B cell (primary cell): ENCODE measurements at regions of chr6 and their contacts with region 1.

Region 1: DNA sequence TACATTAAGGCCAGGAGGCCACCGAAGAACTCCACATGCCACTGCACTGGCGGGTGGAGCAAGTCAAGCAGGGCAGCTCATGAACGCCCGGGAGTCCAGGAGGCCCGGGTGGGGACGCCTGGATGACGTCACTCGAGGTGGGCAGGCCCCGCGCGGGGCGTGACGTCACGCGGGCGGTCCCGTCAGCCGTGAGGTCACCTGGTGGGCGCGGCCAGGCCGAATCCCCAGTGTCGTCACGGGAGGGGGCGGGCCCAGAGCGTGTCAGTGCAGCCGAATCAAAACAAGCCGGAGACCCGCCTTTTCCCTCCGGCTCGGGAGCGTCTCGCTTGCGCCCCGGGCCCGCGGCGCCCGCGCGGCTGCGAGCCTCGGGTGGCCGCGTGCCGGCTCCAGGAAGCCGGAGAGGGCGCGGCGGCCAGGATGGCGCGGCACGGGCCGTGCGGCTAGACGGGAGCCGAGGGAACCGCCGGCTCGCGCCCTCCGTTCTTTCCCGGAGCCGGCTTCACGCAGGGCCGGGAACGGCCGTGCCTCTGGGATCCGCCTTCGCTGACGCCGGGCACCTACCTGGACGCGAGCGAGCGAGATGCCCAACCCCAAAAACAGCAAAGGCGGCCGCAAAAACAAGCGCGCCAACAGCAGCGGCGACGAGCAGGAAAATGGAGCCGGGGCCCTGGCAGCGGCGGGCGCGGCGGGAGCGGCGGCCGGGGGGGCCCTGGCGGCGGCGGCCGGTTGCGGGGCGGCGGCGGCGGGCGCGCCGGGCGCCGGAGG is at the start of gene HECA:
- DNase-seq: peak; percentile 98
- ATAC-seq: peak; percentile 73
- H3K4me3 ChIP-seq: peak within 1 kb of the TSS; percentile 67 to 93 (median 87)
- H3K4me3 Mint-ChIP-seq: peak within 1 kb of the TSS; percentile 97
- H3K27ac ChIP-seq: peak within 1 kb of the TSS; percentile 88 to 94
- H3K27ac Mint-ChIP-seq: peak within 1 kb of the TSS; percentile 98
- H3K4me1 ChIP-seq: peaks cover 68 to 73% of the 10 kb centered on the region in 2 donors
- H3K4me1 Mint-ChIP-seq: peaks cover 71% of the 10 kb centered on the region
- H3K27me3 ChIP-seq: no peaks in the 10 kb centered on the region
- H3K27me3 Mint-ChIP-seq: no peaks in the 10 kb centered on the region
- CTCF ChIP-seq: no peak
- total RNA-seq, gene HECA: 50.4 and 53.0 TPM in 2 replicates

Region 2: DNA sequence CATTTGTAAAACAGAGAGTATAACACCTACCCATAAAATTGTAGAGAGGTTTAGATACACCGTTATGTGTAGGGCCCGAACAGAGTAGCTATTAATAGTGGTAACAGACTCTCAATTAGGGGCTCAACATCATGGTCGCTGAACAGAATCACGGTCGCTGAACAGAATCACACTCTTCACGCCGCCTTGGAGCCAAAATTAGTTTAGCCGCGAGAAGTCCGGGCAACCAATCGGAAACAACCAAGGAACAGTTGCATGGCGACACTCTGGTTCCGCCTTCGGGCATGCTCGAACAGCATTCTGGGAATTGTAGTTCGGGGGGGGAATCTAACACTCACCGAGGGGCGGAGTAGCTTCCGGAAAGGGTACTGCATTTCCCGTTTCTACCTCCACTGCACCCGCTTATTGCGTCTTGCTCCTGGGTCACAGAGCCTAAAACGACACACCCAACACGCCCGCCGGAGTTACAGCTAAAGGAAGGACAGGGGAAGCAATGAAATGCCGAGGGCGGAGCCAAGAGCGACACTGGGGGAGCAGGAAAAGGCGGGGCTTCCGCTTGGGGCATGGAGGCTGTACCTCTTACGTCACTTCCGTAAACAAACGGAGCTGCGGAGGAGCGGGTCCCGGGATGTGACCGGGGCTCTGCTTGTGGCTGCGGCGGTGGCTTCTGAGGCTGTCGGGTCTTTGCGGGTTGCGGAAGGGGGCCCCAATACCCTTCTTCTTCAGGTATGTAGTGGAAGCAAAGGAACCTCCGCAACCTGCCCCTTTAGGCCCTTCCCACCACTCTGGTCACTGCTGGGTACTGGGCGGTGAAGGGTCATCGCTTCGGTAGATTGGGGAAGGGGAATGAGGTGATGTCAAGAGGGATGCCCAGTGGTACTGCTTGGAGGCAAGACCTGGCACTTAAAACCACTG is 361.6 kb before region 1 on chr6 and contains the start of gene CCDC28A:
- CTCF ChIA-PET with region 1: no interaction called
- POLR2A ChIA-PET with region 1: no interaction called
- intact Hi-C with region 1: loop called (anchors 1 kb)
- DNase-seq: peak; percentile 97
- ATAC-seq: peak; percentile 84
- H3K4me3 ChIP-seq: peak within 1 kb of the TSS; percentile 83 to 98 (median 86)
- H3K4me3 Mint-ChIP-seq: peak within 1 kb of the TSS; percentile 99
- H3K27ac ChIP-seq: peak within 1 kb of the TSS; percentile 92 to 97
- H3K27ac Mint-ChIP-seq: peak within 1 kb of the TSS; percentile 99
- H3K4me1 ChIP-seq: peaks cover 21 to 28% of the 10 kb centered on the region in 2 donors
- H3K4me1 Mint-ChIP-seq: peaks cover 32% of the 10 kb centered on the region
- H3K27me3 ChIP-seq: no peaks in the 10 kb centered on the region
- H3K27me3 Mint-ChIP-seq: no peaks in the 10 kb centered on the region
- CTCF ChIP-seq: no peak
- total RNA-seq, gene CCDC28A: 26.3 and 26.9 TPM in 2 replicates

Region 3: DNA sequence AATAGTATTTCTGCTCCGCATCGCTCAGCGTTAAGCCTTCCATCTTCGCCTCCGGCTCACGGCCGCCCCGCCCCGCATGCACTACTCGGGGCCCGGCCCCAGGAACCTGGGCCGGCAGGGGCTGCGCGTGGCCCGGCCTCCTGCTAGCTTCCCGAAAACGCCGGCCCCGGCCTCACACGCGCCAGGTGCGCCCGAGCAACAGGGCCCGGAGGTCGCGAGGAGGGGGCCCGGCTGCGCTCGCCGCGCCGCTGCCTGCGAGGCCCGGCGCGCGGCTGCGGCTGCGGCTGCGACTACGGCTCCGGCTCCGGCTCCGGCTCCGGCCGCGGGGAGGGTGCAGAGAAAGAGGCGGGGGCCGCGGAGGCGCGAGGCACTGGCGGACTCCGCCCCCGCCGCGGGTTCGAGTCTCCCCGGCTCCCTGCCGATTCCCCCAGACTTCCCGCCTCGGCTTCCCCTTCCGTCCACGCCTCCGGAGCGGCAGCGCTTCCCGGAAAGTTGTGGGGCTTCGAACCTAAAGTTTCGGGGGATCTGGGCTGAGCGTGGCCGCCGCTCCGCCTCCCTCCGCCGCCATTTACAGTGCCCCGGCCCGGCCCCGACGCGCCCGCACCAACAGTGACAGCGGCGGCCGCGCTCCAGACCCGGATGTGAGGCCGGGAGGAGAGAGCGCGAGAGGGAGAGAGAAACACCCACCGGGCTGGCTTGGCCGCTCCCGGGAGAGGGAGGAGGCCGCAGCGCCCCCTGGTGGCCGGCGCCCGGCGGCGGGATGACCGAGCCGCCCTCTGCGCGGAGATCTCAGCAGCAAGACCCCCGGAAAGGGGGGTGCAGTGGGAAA is 147.1 kb before region 1 on chr6 and contains the start of gene REPS1:
- CTCF ChIA-PET with region 1: interaction called, 5 read pairs
- POLR2A ChIA-PET with region 1: interaction called, 3 read pairs
- intact Hi-C with region 1: loop called (anchors 5 kb)
- DNase-seq: peak; percentile 91
- ATAC-seq: peak; percentile 91
- H3K4me3 ChIP-seq: peak within 1 kb of the TSS; percentile 52 to 97 (median 87)
- H3K4me3 Mint-ChIP-seq: peak within 1 kb of the TSS; percentile 87
- H3K27ac ChIP-seq: peak within 1 kb of the TSS; percentile 78 to 90
- H3K27ac Mint-ChIP-seq: peak within 1 kb of the TSS; percentile 95
- H3K4me1 ChIP-seq: peaks cover 23 to 26% of the 10 kb centered on the region in 2 donors
- H3K4me1 Mint-ChIP-seq: peaks cover 21% of the 10 kb centered on the region
- H3K27me3 ChIP-seq: no peaks in the 10 kb centered on the region
- H3K27me3 Mint-ChIP-seq: no peaks in the 10 kb centered on the region
- CTCF ChIP-seq: peak; percentile 98
- total RNA-seq, gene REPS1: 55.5 and 57.1 TPM in 2 replicates

Region 4: GRCh38 chr6:139028658-139029469 is 106.1 kb before region 1 on chr6 and contains the start of gene ABRACL:
- CTCF ChIA-PET with region 1: interaction called, 3 read pairs
- POLR2A ChIA-PET with region 1: interaction called, 3 read pairs
- intact Hi-C with region 1: loop called (anchors 1 kb)
- DNase-seq: peak; percentile 87
- ATAC-seq: peak; percentile 72
- H3K4me3 ChIP-seq: peak within 1 kb of the TSS; percentile 84 to 100 (median 89)
- H3K4me3 Mint-ChIP-seq: no peak within 1 kb of the TSS
- H3K27ac ChIP-seq: peak within 1 kb of the TSS; percentile 87 to 92
- H3K27ac Mint-ChIP-seq: peak within 1 kb of the TSS; percentile 94
- H3K4me1 ChIP-seq: peaks cover 27 to 28% of the 10 kb centered on the region in 2 donors
- H3K4me1 Mint-ChIP-seq: peaks cover 20% of the 10 kb centered on the region
- H3K27me3 ChIP-seq: no peaks in the 10 kb centered on the region
- H3K27me3 Mint-ChIP-seq: no peaks in the 10 kb centered on the region
- CTCF ChIP-seq: no peak
- total RNA-seq, gene ABRACL: 22.6 and 23.0 TPM in 2 replicates

Region 5: DNA sequence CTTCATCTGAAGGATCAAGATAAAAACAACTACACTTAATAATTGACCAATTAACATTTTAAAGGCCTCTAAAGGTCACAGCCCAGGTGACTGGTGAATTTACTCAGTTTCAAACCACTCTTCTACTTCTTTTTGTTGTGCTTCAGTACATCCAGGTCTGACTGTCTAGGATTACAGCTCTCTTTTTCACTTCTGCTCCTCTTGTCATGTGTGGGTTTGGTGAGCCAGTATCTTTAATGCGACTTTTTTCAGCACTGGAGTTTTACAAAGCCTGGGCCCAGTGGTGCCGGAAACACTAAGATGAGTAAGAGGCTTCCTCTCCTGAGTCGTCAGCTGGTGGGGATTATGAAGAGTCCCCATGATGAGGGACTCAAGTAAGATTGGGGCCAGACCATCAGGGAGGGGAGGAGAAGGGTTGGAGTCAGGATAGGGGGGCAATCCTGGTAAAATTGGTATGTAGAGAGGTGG is 26.9 kb after region 1 on chr6:
- CTCF ChIA-PET with region 1: interaction called, 3 read pairs
- POLR2A ChIA-PET with region 1: no interaction called
- intact Hi-C with region 1: loop called (anchors 1 kb)
- DNase-seq: peak; percentile 78
- ATAC-seq: peak; percentile 93
- H3K4me3 ChIP-seq: no peak overlapping the region
- H3K4me3 Mint-ChIP-seq: peak overlapping the region; percentile 61
- H3K27ac ChIP-seq: peak overlapping the region; percentile 43 to 84
- H3K27ac Mint-ChIP-seq: peak overlapping the region; percentile 92
- H3K4me1 ChIP-seq: peaks cover 58 to 62% of the 10 kb centered on the region in 2 donors
- H3K4me1 Mint-ChIP-seq: peaks cover 77% of the 10 kb centered on the region
- H3K27me3 ChIP-seq: no peaks in the 10 kb centered on the region
- H3K27me3 Mint-ChIP-seq: no peaks in the 10 kb centered on the region
- CTCF ChIP-seq: no peak

Region 6: GRCh38 chr6:139271056-139271455 is 136.1 kb after region 1 on chr6:
- CTCF ChIA-PET with region 1: interaction called, 3 read pairs
- POLR2A ChIA-PET with region 1: no interaction called
- intact Hi-C with region 1: loop called (anchors 2 kb)
- DNase-seq: peak; percentile 77
- ATAC-seq: peak; percentile 96
- H3K4me3 ChIP-seq: peak overlapping the region in 4 of 5 experiments; percentile 12 to 69 (median 44)
- H3K4me3 Mint-ChIP-seq: peak overlapping the region; percentile 83
- H3K27ac ChIP-seq: peak overlapping the region; percentile 75 to 91
- H3K27ac Mint-ChIP-seq: peak overlapping the region; percentile 93
- H3K4me1 ChIP-seq: peaks cover 50 to 54% of the 10 kb centered on the region in 2 donors
- H3K4me1 Mint-ChIP-seq: peaks cover 69% of the 10 kb centered on the region
- H3K27me3 ChIP-seq: no peaks in the 10 kb centered on the region
- H3K27me3 Mint-ChIP-seq: no peaks in the 10 kb centered on the region
- CTCF ChIP-seq: no peak

Region 7: DNA sequence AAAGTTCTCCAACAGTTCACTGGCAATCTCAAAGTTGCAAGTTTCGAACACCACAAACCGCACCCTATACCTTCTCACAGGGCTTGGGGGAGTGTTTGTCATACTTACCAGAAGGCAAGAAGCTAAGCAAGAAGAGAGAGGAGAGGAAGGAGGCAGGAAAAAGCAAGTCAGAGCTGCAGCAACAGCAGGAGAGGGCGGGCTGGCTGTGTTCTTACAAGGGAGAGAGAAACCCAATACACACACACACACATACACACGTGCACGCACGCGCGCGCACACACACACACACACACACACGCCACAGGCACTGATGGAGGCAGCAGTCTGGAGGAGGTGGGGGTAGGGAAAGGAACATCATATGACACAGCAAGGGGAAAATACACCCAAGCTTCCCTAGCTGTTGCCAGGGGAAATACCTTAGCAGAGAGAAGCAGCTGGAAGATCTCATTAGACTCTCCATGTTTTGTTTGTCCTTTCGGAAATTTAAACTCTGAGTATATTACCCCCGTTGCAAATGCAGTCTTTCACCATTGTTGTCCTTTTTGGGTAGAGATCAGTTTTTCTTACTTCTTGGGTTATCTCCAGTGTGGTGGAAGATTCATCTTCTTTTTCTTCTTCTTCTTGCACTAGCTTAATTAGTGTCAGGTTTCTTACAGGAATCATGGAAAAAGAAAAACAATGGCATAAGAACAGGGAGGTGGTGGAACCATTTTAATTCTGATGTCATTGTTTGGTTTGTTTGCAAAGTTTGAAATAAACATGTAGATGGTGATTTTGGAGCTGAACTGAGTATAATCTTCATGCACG is 157.0 kb after region 1 on chr6 and contains the start of gene TXLNB:
- CTCF ChIA-PET with region 1: no interaction called
- POLR2A ChIA-PET with region 1: no interaction called
- intact Hi-C with region 1: loop called (anchors 5 kb)
- DNase-seq: peak; percentile 77
- ATAC-seq: peak; percentile 49
- H3K4me3 ChIP-seq: peak within 1 kb of the TSS; percentile 17 to 66 (median 34)
- H3K4me3 Mint-ChIP-seq: peak within 1 kb of the TSS; percentile 84
- H3K27ac ChIP-seq: peak within 1 kb of the TSS; percentile 93
- H3K27ac Mint-ChIP-seq: peak within 1 kb of the TSS; percentile 95
- H3K4me1 ChIP-seq: peaks cover 41 to 49% of the 10 kb centered on the region in 2 donors
- H3K4me1 Mint-ChIP-seq: peaks cover 73% of the 10 kb centered on the region
- H3K27me3 ChIP-seq: no peaks in the 10 kb centered on the region
- H3K27me3 Mint-ChIP-seq: no peaks in the 10 kb centered on the region
- CTCF ChIP-seq: no peak
- total RNA-seq, gene TXLNB: 3.3 and 3.6 TPM in 2 replicates